ENCODE measurements at regions of chr9 and their contacts with region 1.

Region 1: GRCh38 chr9:127444921-127445850 is 6.0 kb downstream of the RPL12 start:
- DNase-seq: peak; percentile 67
- H3K4me3 Mint-ChIP-seq: no peak overlapping the region
- H3K27ac Mint-ChIP-seq: peak overlapping the region; percentile 66
- H3K4me1 Mint-ChIP-seq: peaks cover 48% of the 10 kb centered on the region
- H3K27me3 Mint-ChIP-seq: no peaks in the 10 kb centered on the region
- CTCF ChIP-seq: no peak

Region 2: DNA sequence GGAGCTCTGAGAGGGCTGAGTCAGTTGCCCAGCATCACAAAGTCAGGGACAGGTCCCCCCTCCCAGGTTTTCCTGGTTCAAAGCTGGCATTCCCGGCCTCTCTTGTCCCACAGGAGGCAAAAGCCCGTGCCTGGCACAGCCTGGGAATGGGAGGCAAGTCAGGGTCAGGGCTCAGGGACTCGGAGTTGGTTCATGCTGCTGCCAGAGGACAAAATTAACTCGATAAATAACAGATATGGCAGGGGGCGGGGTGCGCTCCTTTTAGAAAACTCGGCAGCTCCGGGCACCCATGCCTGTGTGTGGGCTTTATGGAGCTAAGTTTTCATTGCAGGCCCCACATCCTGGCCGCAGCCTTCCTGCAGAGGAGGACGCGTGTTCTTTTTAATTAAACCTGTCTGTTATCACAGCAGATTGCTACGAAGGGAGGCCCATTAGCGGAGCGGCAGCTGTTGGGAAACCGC is 894.3 kb before region 1 on chr9:
- CTCF ChIA-PET with region 1: no interaction called
- POLR2A ChIA-PET with region 1: no interaction called
- intact Hi-C with region 1: no loop called
- DNase-seq: no peak
- H3K4me3 Mint-ChIP-seq: no peak overlapping the region
- H3K27ac Mint-ChIP-seq: no peak overlapping the region
- H3K4me1 Mint-ChIP-seq: no peaks in the 10 kb centered on the region
- H3K27me3 Mint-ChIP-seq: no peaks in the 10 kb centered on the region
- CTCF ChIP-seq: no peak

Region 3: GRCh38 chr9:127360829-127361228 is 84.4 kb before region 1 on chr9:
- CTCF ChIA-PET with region 1: interaction called, 3 read pairs
- POLR2A ChIA-PET with region 1: no interaction called
- intact Hi-C with region 1: loop called (anchors 5 kb)
- DNase-seq: peak; percentile 67
- H3K4me3 Mint-ChIP-seq: no peak overlapping the region
- H3K27ac Mint-ChIP-seq: peak overlapping the region; percentile 88
- H3K4me1 Mint-ChIP-seq: peaks cover 10% of the 10 kb centered on the region
- H3K27me3 Mint-ChIP-seq: no peaks in the 10 kb centered on the region
- CTCF ChIP-seq: peak; percentile 39